K562 (cell line): ENCODE measurements at regions of chr22 and their contacts with region 1.

Region 1: DNA sequence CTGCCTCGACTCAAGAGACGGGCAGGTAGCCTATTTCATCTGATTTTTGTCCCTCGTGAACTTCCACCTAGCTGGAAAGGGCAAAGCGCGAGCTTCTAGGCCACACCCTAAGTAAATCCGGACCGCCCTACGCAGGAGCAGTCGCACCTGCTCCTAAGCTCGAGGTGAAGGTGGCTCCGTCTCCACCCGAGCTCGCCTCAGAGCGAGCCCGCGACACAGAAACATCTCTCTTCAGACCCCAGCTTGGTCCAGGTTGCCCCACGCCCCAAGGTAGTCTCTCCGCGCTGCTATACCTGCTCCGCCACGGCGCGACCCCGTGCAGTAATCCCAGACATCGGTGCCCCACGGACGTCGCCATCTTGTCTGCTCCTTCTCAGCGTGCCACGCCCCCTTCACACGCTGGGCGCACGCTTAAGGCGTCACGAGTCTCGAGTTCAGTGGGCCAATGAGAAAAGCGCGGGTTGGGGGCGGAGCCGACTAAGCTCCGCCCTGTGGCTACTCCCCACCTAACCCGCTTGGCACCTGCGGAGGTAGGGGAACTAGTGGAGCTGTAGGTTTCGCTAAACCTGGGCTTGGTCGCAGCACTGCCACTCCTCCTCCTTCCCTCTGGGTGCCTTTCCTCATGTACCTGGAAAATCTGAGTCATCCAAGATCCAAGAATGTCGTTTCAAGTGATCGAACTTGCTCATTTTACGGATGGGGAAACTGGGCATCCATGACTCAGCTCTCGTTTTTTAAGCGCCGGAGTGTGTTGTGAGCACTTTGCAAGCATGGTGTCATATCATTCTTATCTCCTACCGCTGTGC is at the start of gene PISD:
- DNase-seq: peak; percentile 95 to 96 (median 95)
- ATAC-seq: peak; percentile 96
- H3K4me3 ChIP-seq: peak within 1 kb of the TSS; percentile 94
- H3K27ac ChIP-seq: peak within 1 kb of the TSS; percentile 78
- H3K4me1 ChIP-seq: peaks cover 5% of the 10 kb centered on the region in 2 experiments; a peak in 4 of 5 replicates
- H3K27me3 ChIP-seq: no peaks in the 10 kb centered on the region
- CTCF ChIP-seq: no peak
- EP300 ChIP-seq: no peak
- POLR2A ChIP-seq: peak; percentile 84
- RAD21 ChIP-seq: no peak
- polyA plus RNA-seq, gene PISD: 44.4 to 65.9 TPM

Region 2: DNA sequence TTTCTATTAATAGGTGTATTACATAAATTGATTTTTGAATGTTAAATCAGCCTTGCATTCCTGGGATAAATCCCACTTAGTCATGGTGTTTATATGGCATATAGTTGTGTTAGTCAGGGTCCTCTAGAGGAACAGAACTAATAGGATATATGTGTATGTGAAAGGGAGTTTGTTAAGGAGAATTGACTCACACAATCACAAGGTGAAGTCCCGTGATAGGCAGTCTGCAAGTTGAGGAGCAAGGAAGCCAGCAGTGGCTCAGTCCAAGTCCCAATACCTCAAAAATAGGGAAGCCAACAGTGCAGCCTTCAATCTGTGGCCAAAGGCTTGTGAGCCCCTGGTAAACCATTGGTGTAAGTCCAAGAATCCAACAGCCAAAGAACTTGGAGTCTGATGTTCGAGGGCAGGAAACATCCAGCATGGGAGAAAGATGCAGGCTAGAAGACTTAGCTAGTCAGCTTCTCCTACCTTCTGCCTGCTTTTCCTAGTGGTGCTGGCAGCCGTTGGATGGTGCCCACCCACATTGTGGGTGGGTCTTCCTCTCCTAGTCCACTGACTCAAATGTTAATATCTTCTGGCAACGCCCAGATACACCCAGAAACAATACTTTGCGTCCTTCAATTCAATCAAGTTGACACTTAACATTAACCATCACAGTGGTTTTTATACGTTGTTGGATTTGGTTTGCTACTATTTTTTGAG is 152.8 kb before region 1 on chr22:
- CTCF ChIA-PET with region 1: no interaction called
- POLR2A ChIA-PET with region 1: no interaction called
- in situ Hi-C with region 1: no loop called
- intact Hi-C with region 1: no loop called
- DNase-seq: no peak
- ATAC-seq: no peak
- H3K4me3 ChIP-seq: no peak overlapping the region
- H3K27ac ChIP-seq: no peak overlapping the region
- H3K4me1 ChIP-seq: no peaks in the 10 kb centered on the region
- H3K27me3 ChIP-seq: no peaks in the 10 kb centered on the region
- CTCF ChIP-seq: no peak
- EP300 ChIP-seq: no peak
- POLR2A ChIP-seq: no peak
- RAD21 ChIP-seq: no peak

Region 3: GRCh38 chr22:31630331-31631329 is 31.4 kb before region 1 on chr22:
- CTCF ChIA-PET with region 1: no interaction called
- POLR2A ChIA-PET with region 1: interaction called, 14 read pairs
- in situ Hi-C with region 1: no loop called
- intact Hi-C with region 1: no loop called
- DNase-seq: peak; percentile 88 to 90 (median 90)
- ATAC-seq: peak; percentile 79
- H3K4me3 ChIP-seq: peak overlapping the region; percentile 82
- H3K27ac ChIP-seq: peak overlapping the region; percentile 87
- H3K4me1 ChIP-seq: peaks cover 41 to 53% of the 10 kb centered on the region in 2 experiments
- H3K27me3 ChIP-seq: no peaks in the 10 kb centered on the region
- CTCF ChIP-seq: 0 out of 6 replicates have a peak, but pooled peaks of 1 of the 3 experiments have one; percentile 8
- EP300 ChIP-seq: no peak
- POLR2A ChIP-seq: peak; percentile 74
- RAD21 ChIP-seq: no peak

Region 4: GRCh38 chr22:31749636-31750364 is 87.7 kb after region 1 on chr22 and contains the start of gene PRR14L:
- CTCF ChIA-PET with region 1: no interaction called
- POLR2A ChIA-PET with region 1: interaction called, 3 read pairs
- in situ Hi-C with region 1: no loop called
- intact Hi-C with region 1: loop called (anchors 10 kb)
- DNase-seq: peak; percentile 82 to 97 (median 88)
- ATAC-seq: peak; percentile 79
- H3K4me3 ChIP-seq: peak within 1 kb of the TSS; percentile 90
- H3K27ac ChIP-seq: peak within 1 kb of the TSS; percentile 89
- H3K4me1 ChIP-seq: peaks cover 34 to 38% of the 10 kb centered on the region in 2 experiments
- H3K27me3 ChIP-seq: no peaks in the 10 kb centered on the region
- CTCF ChIP-seq: peak in 1 of 3 experiments; percentile 21; a peak in 1 of 6 replicates
- EP300 ChIP-seq: peak; percentile 32; the same call in 1 of the 2 replicates
- POLR2A ChIP-seq: peak; percentile 89
- RAD21 ChIP-seq: no peak
- polyA plus RNA-seq, gene PRR14L: 2.8 to 6.8 TPM

Region 5: GRCh38 chr22:31872209-31872608 is 210.2 kb after region 1 on chr22:
- CTCF ChIA-PET with region 1: no interaction called
- POLR2A ChIA-PET with region 1: no interaction called
- in situ Hi-C with region 1: no loop called
- intact Hi-C with region 1: loop called (anchors 10 kb)
- DNase-seq: peak; percentile 39 to 76 (median 56)
- ATAC-seq: peak; percentile 95
- H3K4me3 ChIP-seq: no peak overlapping the region
- H3K27ac ChIP-seq: no peak overlapping the region
- H3K4me1 ChIP-seq: peaks cover 3 to 15% of the 10 kb centered on the region in 2 experiments; a peak in 3 of 5 replicates
- H3K27me3 ChIP-seq: no peaks in the 10 kb centered on the region
- CTCF ChIP-seq: peak; percentile 66 to 80 (median 74)
- EP300 ChIP-seq: no peak
- POLR2A ChIP-seq: no peak
- RAD21 ChIP-seq: peak; percentile 78 to 93

Region 6: DNA sequence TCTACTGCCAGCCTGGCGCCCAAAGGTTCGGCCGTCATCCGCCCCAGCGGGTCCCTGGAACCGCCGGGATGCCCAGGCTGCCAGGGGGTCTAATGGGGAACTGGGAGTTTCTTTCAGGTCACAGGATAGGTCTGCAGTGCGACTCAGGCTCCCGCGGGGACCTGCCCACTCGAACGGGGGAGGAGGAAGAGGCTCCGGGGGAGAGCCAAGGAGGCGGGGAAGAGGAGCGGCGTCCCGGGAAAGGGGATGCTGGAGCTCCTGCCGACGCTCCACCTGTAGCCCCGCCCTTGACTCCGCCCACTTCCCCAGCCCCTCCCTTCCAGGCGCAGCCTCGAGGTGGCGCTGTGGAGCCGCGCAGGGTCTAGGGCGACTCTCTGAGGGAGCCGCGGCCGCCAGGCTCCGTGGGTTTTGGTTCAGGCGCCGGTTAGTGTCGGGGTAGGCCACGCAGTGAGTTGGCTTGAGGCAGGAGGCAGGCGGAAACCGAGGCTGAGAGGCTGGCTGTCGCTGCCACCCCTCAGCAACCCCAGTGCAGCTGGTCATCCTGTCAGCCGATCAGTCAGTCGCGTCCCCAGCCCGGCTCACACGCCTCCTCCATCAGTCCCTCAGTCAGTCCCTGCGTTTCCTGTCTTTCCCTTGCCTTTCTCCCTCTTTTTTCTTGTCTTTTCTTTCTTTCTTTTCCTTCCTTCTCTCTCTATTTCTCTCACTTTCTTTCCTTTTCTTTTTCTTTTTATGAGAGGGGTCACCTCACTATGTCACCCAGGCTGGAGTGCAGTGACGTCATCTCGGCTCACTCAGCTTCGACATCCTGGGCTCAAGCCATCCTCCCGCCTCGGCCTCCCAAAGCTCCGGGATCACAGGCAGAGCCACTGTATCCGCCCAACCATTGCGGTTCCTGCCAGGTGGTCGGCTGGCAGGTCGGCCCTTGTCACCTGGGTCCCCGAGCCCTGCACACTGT is 308.7 kb after region 1 on chr22:
- CTCF ChIA-PET with region 1: interaction called, 4 read pairs
- POLR2A ChIA-PET with region 1: interaction called, 7 read pairs
- in situ Hi-C with region 1: loop called (anchors 5 kb)
- intact Hi-C with region 1: loop called (anchors 2 kb)
- DNase-seq: peak; percentile 82 to 96 (median 92)
- ATAC-seq: peak; percentile 97
- H3K4me3 ChIP-seq: peak overlapping the region; percentile 45
- H3K27ac ChIP-seq: no peak overlapping the region
- H3K4me1 ChIP-seq: peaks cover 3 to 18% of the 10 kb centered on the region in 2 experiments; a peak in 4 of 5 replicates
- H3K27me3 ChIP-seq: no peaks in the 10 kb centered on the region
- CTCF ChIP-seq: peak; percentile 56 to 89 (median 75)
- EP300 ChIP-seq: no peak
- POLR2A ChIP-seq: no peak
- RAD21 ChIP-seq: peak; percentile 36 to 58